ENCODE measurements at regions of chr14 and their contacts with region 1.

Region 1: GRCh38 chr14:104239861-104240301 is 101.5 kb downstream of the KIF26A start:
- DNase-seq: no peak
- H3K4me3 ChIP-seq: no peak overlapping the region
- H3K27ac ChIP-seq: no peak overlapping the region
- H3K4me1 ChIP-seq: no peaks in the 10 kb centered on the region
- H3K27me3 ChIP-seq: no peaks in the 10 kb centered on the region
- CTCF ChIP-seq: no peak

Region 2: GRCh38 chr14:103808403-103809001 is 431.4 kb before region 1 on chr14:
- CTCF ChIA-PET with region 1: no interaction called
- dilution Hi-C with region 1: loop called (anchors 10 kb)
- in situ Hi-C with region 1: no loop called
- intact Hi-C with region 1: no loop called
- DNase-seq: peak; percentile 54
- H3K4me3 ChIP-seq: no peak overlapping the region
- H3K27ac ChIP-seq: no peak overlapping the region
- H3K4me1 ChIP-seq: peaks cover 11% of the 10 kb centered on the region
- H3K27me3 ChIP-seq: no peaks in the 10 kb centered on the region
- CTCF ChIP-seq: peak; percentile 83 to 92

Region 3: DNA sequence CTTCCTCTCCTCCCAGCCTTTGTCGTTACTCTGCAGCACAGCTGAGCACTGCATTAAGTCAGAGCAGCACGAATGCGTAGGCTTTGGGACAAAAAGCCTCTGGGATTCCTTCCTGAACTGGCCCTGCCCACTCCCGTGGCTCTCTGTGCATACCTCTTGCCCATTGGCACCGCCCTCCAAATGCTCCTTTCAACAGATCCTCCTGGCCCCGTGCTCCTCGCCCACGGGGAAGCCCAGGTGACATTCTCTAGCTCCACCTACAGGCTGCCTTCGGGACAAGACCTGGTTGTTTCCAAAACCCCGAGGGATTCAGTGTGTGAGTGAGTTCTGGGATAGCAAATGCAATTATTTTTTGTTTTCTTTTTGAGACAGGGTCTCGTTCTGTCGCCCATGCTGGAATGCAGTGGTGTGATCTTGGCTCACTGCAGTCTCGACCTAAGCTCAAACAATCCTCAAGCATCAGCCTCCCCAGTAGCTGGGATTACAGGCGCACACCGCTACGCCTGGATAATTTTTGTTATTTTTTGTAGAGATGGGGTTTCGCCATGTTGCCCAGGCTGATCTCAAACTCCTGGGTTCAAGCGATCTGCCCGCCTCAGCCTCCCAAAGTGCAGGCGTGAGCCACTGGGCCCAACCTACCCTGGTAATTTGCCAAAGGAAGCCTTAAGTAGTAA is 329.5 kb before region 1 on chr14:
- CTCF ChIA-PET with region 1: no interaction called
- dilution Hi-C with region 1: no loop called
- in situ Hi-C with region 1: no loop called
- intact Hi-C with region 1: no loop called
- DNase-seq: peak; percentile 93
- H3K4me3 ChIP-seq: peak overlapping the region in 1 of 3 experiments; percentile 2
- H3K27ac ChIP-seq: no peak overlapping the region
- H3K4me1 ChIP-seq: peaks cover 8% of the 10 kb centered on the region
- H3K27me3 ChIP-seq: no peaks in the 10 kb centered on the region
- CTCF ChIP-seq: peak; percentile 92 to 94

Region 4: GRCh38 chr14:104037903-104038302 is 202.0 kb before region 1 on chr14:
- CTCF ChIA-PET with region 1: no interaction called
- dilution Hi-C with region 1: loop called (anchors 10 kb)
- in situ Hi-C with region 1: no loop called
- intact Hi-C with region 1: no loop called
- DNase-seq: no peak
- H3K4me3 ChIP-seq: no peak overlapping the region
- H3K27ac ChIP-seq: no peak overlapping the region
- H3K4me1 ChIP-seq: no peaks in the 10 kb centered on the region
- H3K27me3 ChIP-seq: peaks cover 8% of the 10 kb centered on the region
- CTCF ChIP-seq: no peak

Region 5: GRCh38 chr14:104169699-104170479 is 70.0 kb before region 1 on chr14:
- CTCF ChIA-PET with region 1: no interaction called
- dilution Hi-C with region 1: loop called (anchors 10 kb)
- in situ Hi-C with region 1: no loop called
- intact Hi-C with region 1: no loop called
- DNase-seq: no peak
- H3K4me3 ChIP-seq: no peak overlapping the region
- H3K27ac ChIP-seq: no peak overlapping the region
- H3K4me1 ChIP-seq: peaks cover 5% of the 10 kb centered on the region
- H3K27me3 ChIP-seq: no peaks in the 10 kb centered on the region
- CTCF ChIP-seq: no peak

Region 6: DNA sequence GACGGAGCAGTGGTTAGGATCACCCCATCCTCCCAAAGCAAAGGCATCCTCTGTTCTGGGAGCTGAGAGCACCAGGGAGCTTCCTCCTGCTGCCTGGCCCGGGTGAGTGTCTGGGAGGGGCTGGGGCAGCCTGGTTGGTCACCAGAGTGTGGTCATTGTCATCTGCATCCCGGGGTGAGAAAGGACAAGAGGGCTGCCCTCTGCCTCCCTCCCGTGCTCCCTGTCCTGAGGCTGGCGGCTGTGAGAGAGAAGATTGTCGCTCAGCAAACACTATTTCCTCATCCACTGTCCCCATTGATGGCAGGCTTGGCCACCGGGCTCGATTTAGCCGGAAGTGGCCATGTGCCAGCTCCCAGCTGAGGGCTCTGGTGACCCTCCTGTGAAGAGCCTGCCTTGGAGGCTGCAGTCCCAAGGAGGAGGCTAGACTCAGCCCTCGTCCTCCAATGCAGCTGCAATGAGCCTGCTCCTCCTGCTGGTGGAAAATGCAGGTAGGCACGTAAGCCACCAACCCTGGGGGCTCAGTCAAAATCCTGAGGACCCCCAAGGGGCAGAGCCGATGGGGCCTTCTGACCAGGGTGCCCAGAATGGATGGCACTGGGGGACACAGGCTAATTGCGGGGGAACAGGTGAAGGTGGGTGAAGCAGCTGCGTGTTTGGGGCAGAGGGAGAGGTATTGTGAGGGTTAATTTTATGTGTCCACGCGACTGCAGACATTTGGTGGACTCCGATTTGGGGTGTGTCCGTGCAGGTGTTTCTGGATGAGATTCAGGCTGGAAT is 54.2 kb after region 1 on chr14:
- CTCF ChIA-PET with region 1: no interaction called
- dilution Hi-C with region 1: loop called (anchors 10 kb)
- in situ Hi-C with region 1: no loop called
- intact Hi-C with region 1: no loop called
- DNase-seq: no peak
- H3K4me3 ChIP-seq: no peak overlapping the region
- H3K27ac ChIP-seq: no peak overlapping the region
- H3K4me1 ChIP-seq: no peaks in the 10 kb centered on the region
- H3K27me3 ChIP-seq: no peaks in the 10 kb centered on the region
- CTCF ChIP-seq: no peak

Measured in mammary epithelial cell (primary cell).